ENCODE measurements at regions of chr20 and their contacts with region 1.

Region 1: DNA sequence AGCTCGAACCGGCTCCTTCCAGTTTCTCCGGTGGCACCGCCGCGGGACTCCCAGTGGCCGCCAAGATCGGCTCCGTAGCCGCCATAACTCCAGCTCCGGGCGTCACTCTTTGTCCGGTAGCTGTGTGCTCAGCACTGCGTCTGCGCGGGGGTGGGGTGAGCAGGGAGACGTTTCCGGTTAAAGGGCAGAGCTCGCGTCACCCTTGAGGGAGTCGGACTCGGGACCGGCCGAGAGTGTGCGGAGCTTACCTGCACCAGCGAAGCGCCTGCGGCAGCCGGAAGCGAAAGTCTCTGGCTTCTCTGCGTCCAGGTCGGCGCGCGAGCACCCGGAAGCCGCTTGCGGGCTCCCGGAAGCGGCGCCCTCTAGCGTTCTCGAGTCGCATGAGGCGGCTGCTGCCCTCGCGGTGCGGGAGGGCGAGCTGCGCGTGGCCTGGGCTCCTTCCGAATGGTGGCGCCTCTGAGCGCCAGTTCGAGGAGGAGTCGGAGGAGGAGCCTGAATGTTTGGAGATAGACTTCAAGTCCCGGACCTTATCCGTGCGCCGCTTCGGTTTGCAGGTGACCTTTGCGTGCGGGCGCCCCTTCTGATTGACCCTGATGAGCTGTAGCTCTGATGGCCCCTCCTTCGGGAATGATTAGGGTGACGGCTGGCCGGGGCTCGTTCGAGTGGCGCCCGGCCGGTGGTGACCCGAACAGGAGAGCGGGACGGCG is at the start of gene SCAND1:
- DNase-seq: peak; percentile 100
- H3K4me3 ChIP-seq: peak within 1 kb of the TSS; percentile 84
- H3K27ac ChIP-seq: peak within 1 kb of the TSS; percentile 97
- H3K4me1 ChIP-seq: peaks cover 16% of the 10 kb centered on the region
- CTCF ChIP-seq: peak; percentile 96
- total RNA-seq, gene SCAND1: 62.5 and 97.6 TPM in 2 replicates

Region 2: DNA sequence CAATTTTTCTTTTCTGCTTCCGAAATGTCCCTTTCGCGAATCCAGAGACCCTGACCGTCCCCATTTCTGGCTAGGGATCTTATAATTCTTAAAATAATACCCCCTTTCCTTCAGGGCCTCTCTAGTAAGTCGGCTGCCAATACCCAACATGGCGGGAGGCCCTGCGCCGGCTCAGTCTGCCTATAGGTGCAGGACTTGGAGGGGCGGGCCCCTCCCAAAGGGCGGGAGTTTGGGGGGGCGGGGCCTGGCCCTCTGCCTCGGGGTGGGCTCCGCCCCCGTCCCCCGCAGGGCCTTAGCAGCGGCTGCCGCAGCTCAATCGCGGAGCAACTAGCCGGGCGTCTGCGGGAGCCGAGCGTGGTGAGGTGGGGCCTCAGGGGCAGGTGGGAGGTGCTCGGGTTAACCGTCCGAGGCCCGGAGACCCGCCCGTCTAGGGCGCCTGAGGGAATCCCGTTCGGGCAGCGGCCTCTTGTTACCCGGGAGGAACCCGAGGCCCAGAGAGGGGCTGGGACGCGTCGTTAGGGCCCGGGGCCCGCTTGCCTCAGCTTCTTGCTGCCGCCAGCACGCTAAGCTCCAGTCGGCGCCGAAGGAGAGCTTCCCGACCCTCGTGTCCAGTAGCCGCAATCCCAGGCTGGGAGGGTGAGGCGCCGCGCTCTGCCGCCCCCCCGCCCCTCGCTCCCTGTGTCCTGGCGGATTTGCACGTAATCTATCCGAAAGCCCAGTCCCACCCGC is 499.3 kb before region 1 on chr20 and contains the start of gene CEP250:
- CTCF ChIA-PET with region 1: interaction called, 16 read pairs
- POLR2A ChIA-PET with region 1: no interaction called
- intact Hi-C with region 1: no loop called
- DNase-seq: peak; percentile 98
- H3K4me3 ChIP-seq: peak within 1 kb of the TSS; percentile 79
- H3K27ac ChIP-seq: peak within 1 kb of the TSS; percentile 64
- H3K4me1 ChIP-seq: peaks cover 21% of the 10 kb centered on the region
- CTCF ChIP-seq: no peak
- total RNA-seq, gene CEP250: 28.6 and 31.6 TPM in 2 replicates

Region 3: DNA sequence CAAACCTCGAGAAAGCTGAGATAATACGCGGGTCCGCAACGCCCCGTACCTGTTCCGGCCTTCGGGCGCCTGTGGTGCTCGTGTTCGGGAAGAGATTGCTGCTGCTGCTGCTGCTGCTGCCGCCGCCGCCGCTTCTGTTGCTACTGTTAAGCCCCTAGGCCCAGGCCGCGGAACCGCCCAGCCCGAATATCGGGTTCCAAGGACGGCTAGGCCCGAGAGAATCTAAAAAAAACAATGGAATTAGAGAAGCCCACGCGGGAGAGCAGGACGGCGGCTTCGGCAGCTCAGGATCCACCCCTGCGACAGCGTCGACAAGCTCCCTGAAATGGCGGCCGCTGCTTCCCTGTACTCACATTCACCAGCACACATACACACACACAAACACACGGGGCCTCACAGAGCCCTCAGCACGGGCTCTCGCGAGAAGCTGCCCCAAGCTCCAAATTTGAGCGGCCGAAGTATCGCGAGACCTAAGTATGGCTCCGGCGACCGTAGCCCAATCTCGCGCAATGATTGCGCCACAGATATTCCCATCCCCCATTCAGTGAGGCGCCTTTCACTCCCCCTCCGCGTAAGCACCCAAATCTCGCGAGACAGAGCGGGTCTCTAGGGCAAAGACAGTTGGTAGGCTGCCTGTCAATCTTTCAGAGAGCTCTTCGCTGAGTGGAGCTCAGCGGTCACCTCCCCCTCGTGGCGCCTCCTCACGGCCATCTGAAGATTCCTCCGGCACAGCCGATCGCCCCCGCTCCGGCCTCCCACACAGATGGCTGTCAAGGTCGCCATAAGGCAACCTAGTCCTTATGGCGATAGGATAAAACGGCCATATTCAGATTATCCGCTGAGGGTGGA is 212.2 kb before region 1 on chr20 and contains the start of gene RBM39:
- CTCF ChIA-PET with region 1: interaction called, 4 read pairs
- POLR2A ChIA-PET with region 1: interaction called, 22 read pairs
- intact Hi-C with region 1: loop called (anchors 5 kb)
- DNase-seq: peak; percentile 100
- H3K4me3 ChIP-seq: peak within 1 kb of the TSS; percentile 95
- H3K27ac ChIP-seq: peak within 1 kb of the TSS; percentile 96
- H3K4me1 ChIP-seq: peaks cover 42% of the 10 kb centered on the region
- CTCF ChIP-seq: peak; percentile 33; the same call in 1 of the 2 replicates
- total RNA-seq, gene RBM39: 346 and 448 TPM in 2 replicates

Region 4: DNA sequence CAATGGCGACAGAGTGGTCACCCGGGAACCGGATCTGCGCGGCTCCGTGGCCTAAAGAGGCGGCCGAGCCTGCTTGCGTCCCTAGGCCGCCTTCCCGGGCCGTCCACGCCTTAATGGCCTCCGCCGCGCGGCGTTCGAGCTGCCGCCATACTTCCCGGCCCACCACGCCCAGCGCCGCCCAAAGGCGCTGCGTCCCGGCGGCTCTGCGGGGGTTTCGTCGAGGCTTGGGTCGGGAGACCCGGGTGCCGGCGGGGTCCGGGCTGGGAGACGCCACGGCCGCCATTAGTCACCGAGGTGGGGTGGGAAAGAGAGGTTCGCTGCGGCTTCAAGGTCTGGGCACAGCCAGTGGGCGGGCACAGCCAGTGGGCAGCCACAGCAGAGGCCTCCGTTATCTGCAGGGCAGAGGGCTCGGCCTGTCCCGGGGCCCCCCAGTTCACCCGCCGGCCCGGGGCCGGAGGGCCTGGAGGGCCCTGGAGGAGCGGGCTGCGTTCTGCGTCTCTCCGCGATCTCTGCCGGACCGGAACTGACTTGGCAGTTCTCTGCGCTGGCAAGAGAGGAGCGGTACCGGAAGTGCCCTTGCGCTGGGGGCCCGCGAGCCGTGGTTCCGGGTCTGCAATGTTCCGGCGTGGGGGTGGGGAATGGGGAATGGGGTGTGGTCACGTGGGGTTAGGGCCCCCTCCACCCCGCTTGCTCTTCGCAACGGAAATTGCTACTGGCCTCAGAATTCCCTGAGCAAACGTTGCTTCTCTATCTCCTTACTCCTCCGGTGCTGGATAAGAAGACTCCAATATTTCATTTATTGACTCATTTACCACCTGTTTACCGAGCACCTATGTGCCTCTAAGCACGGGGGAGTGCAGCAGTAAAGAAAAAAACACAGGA is 96.3 kb after region 1 on chr20:
- CTCF ChIA-PET with region 1: no interaction called
- POLR2A ChIA-PET with region 1: no interaction called
- intact Hi-C with region 1: loop called (anchors 1 kb)
- DNase-seq: peak; percentile 95
- H3K4me3 ChIP-seq: peak overlapping the region; percentile 100
- H3K27ac ChIP-seq: peak overlapping the region; percentile 80
- H3K4me1 ChIP-seq: peaks cover 15% of the 10 kb centered on the region
- CTCF ChIP-seq: no peak

Region 5: GRCh38 chr20:36132802-36133211 is 178.5 kb after region 1 on chr20:
- CTCF ChIA-PET with region 1: no interaction called
- POLR2A ChIA-PET with region 1: interaction called, 3 read pairs
- intact Hi-C with region 1: loop called (anchors 1 kb)
- DNase-seq: peak; percentile 60
- H3K4me3 ChIP-seq: no peak overlapping the region
- H3K27ac ChIP-seq: no peak overlapping the region
- H3K4me1 ChIP-seq: peaks cover 33% of the 10 kb centered on the region
- CTCF ChIP-seq: no peak

Measured in OCI-LY7 (cell line).